Gastrocnemius medialis (tissue), 4 donors: ENCODE measurements at regions of chr1 and their contacts with region 1.

Region 1: GRCh38 chr1:110948038-110948810 is 15.5 kb downstream of the LRIF1 start:
- DNase-seq: no peak
- ATAC-seq: no peak
- H3K4me3 ChIP-seq: no peak overlapping the region
- H3K27ac ChIP-seq: no peak overlapping the region
- H3K4me1 ChIP-seq: no peaks in the 10 kb centered on the region
- H3K27me3 ChIP-seq: no peaks in the 10 kb centered on the region
- CTCF ChIP-seq: no peak
- POLR2A ChIP-seq: no peak

Region 2: DNA sequence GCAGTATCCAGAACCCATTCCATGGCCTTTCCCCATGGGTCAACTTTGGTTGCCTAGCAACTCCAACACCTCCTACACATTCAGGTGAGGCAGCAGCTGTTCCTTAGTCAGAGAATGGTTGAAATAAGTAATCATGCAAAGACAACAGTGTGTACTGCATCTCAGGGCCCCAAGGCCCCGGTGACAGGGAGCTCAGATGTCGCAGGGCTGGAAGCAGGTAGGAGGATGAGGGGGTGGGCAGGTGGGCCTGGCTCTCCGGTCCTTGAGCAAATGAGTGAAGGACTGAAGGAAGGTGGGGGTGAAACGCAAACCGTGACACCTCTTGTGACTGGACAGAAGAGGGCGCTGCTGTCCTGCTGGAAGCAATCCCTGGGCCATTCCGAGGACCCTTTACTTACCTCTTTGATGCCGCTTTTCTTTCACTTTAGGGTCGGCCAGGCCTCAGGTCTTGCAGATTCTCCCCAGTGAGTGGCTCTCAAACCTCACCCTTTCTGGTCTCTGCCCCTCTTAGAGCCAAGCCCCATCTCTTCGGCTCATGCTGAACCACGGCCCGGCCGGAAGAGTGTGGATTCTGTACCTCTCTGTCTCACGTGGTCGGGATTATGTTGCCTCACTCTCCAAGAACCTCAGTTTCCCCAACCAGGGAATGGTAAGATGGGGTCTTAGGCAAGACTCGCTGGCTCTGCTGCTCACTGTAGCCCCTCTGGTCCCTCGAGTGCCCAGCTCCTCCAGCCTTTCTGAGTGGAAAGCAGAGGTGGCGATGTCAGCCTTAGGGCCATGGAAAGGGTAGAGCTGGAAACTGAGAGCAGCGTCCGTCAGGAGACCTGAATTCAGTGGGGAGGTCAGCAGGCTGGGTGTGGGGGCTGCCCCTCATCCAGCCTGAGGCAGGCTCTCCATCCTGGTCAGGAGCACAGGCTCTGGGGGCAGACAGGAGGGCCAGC is 423.6 kb before region 1 on chr1:
- in situ Hi-C with region 1: no loop called
- intact Hi-C with region 1: no loop called
- DNase-seq: no peak
- ATAC-seq: peak in 1 of 2 donors; percentile 42
- H3K4me3 ChIP-seq: no peak overlapping the region
- H3K27ac ChIP-seq: no peak overlapping the region
- H3K4me1 ChIP-seq: peaks cover 0 to 8% of the 10 kb centered on the region in 2 donors
- H3K27me3 ChIP-seq: peaks cover 0 to 10% (median 0%) of the 10 kb centered on the region in 3 donors
- CTCF ChIP-seq: peak in 4 of 5 experiments; percentile 17 to 53 (median 42)
- POLR2A ChIP-seq: no peak

Region 3: DNA sequence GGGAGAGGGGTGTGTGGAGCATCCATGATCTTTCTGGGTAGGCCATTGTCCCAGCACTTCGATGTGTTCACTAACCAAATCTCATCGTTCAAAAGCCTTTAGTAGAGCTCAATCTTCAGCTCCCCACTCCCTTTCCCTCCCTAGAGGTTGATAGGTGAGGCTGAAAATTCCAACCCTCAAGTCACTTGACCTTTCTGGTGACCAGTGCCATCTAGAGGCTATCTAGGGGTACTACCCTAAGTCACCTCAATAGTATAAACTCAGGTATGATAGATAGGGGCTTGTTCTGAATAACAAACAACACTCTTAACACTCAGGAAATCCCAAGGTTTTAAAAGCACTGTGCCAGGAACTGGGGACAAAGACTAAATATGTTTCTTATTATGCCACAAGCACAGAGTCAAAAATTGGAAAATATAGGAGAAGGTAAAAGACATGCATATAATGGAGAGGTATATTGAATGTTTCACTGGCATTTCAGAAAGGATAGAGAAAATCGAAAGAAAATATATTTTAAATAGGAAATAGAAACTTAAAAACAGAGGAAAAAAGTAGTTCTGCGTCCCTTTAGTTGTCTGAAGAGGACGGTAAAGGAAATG is 118.2 kb before region 1 on chr1:
- in situ Hi-C with region 1: loop called in 1 of 4 experiments (anchors 25 kb)
- intact Hi-C with region 1: no loop called
- DNase-seq: no peak
- ATAC-seq: no peak
- H3K4me3 ChIP-seq: no peak overlapping the region
- H3K27ac ChIP-seq: no peak overlapping the region
- H3K4me1 ChIP-seq: no peaks in the 10 kb centered on the region
- H3K27me3 ChIP-seq: no peaks in the 10 kb centered on the region
- CTCF ChIP-seq: peak in 1 of 5 experiments; percentile 29
- POLR2A ChIP-seq: no peak